Activated CD4-positive, alpha-beta T cell treated with anti-CD3 and anti-CD28 coated beads for 36 hours (primary cell): ENCODE measurements at regions of chr1 and their contacts with region 1.

Region 1: DNA sequence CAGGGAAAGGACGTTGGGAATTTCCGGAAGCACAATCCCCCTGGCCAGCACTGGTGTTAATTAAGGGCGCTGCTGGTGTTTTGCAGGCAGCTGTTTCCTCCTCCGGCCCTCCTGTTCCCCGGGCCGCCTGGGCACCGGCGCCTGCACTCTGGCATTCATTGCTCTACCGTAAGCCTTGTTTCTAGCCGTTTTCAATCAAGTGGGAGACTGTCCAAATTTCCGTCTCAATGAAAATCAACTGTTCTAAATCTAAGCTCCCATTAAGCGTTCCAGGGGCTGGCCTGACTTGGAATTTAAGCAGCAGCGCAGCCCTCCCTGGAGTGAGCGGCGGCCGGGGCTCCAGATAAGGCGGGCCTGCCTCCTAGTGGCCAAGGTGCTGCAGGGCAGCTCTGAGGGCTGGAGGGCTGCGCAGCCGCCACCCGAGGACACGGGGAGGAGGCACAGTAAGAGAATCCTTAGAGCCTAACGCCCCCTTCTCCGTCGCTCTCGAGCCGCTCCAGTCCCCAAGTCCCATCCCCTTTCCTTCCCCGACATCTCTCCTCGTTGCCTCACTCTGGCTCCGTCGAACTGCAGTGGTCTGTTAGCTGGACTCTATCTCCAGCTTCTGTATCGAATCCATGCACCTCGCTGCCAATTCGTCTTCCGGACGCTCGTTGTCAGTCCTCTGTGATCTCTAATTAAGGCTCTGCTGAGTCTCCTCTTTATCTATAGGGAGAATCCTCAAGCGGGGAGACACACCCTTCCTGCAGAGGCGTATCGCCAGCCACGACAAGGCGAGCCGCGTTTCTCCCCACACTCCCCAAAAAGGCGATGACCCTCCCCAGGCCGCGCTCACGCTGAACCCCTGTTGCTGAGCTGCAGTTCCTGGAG is 57.8 kb upstream of the LRRC8D start:
- DNase-seq: peak; percentile 94
- ATAC-seq: peak; percentile 99
- H3K4me3 Mint-ChIP-seq: peak overlapping the region; percentile 68
- H3K27ac Mint-ChIP-seq: peak overlapping the region; percentile 89
- H3K4me1 Mint-ChIP-seq: peaks cover 54% of the 10 kb centered on the region
- H3K27me3 Mint-ChIP-seq: no peaks in the 10 kb centered on the region

Region 2: GRCh38 chr1:89483010-89483756 is 279.8 kb before region 1 on chr1:
- CTCF ChIA-PET with region 1: interaction called, 45 read pairs
- POLR2A ChIA-PET with region 1: no interaction called
- intact Hi-C with region 1: loop called (anchors 1 kb)
- DNase-seq: peak; percentile 91
- ATAC-seq: peak; percentile 86
- H3K4me3 Mint-ChIP-seq: no peak overlapping the region
- H3K27ac Mint-ChIP-seq: no peak overlapping the region
- H3K4me1 Mint-ChIP-seq: peaks cover 21% of the 10 kb centered on the region
- H3K27me3 Mint-ChIP-seq: no peaks in the 10 kb centered on the region

Region 3: DNA sequence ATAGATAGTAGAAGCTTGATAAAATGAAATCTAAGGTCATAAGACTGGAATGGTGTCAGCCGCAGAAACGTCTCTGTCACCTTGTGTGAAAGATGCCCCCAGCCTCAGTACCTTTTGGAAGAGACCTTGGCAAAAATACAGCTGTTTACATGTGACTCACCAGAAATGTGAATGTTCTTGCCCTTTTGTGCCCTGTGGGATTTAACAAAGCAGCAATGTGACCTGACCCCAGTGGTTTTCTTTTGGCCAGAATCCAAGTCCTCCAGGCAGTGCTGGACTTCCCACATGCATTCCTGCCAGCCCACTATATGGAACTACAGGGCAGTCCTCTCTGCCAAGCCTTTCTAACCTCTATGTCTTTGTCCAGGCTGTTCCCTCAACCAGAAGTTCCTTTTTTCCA is 157.3 kb before region 1 on chr1:
- CTCF ChIA-PET with region 1: interaction called, 30 read pairs
- POLR2A ChIA-PET with region 1: interaction called, 6 read pairs
- intact Hi-C with region 1: loop called in 1 of 2 experiments (anchors 2 kb)
- DNase-seq: no peak
- ATAC-seq: no peak
- H3K4me3 Mint-ChIP-seq: peak overlapping the region; percentile 62
- H3K27ac Mint-ChIP-seq: peak overlapping the region; percentile 99
- H3K4me1 Mint-ChIP-seq: peaks cover 92% of the 10 kb centered on the region
- H3K27me3 Mint-ChIP-seq: no peaks in the 10 kb centered on the region

Region 4: GRCh38 chr1:89657886-89658285 is 105.1 kb before region 1 on chr1:
- CTCF ChIA-PET with region 1: interaction called, 24 read pairs
- POLR2A ChIA-PET with region 1: interaction called, 4 read pairs
- intact Hi-C with region 1: no loop called
- DNase-seq: no peak
- ATAC-seq: peak; percentile 56
- H3K4me3 Mint-ChIP-seq: no peak overlapping the region
- H3K27ac Mint-ChIP-seq: peak overlapping the region; percentile 88
- H3K4me1 Mint-ChIP-seq: peaks cover 94% of the 10 kb centered on the region
- H3K27me3 Mint-ChIP-seq: no peaks in the 10 kb centered on the region

Region 5: DNA sequence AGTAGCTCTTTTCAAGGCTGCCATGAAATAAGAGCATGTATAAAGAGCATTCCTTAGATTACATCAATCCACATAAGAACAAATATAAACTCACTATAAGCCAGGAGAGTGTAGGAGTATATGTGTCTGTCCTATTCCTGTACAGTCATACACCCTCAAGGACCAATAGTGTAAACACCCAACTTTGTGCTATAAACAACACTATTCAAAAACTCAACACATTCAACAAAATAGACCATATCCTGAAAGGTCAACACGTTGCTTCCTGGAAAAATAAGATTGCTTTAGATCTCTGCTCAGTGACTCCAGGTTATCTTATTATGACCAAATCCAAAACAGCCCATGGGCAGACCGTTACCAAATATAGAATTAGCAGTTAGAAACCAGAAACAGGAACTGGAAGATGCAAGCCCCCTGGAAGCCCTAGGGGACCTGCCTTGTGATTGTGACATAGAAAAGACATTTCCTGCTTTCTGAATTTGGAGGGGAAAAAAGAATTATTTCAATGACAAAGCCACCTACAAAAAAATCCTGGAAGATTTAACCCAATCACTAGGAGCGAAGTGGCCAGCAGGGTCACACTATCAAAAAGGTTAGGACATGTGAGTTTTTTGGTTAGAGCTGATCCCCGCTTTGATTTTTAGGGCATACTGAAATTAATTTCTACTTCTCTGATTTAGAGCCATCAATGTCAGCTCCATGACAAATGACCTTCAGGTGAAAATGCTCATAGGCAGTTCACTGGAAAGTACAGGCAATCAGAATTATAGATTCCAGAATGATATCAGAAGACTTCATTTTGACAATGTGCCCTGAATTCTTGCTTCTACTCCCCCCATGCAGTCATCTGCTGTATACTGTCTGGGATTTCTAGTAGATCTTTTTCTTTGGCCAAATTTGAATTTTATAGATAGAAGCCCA is 70.2 kb before region 1 on chr1:
- CTCF ChIA-PET with region 1: interaction called, 13 read pairs
- POLR2A ChIA-PET with region 1: no interaction called
- intact Hi-C with region 1: loop called in 1 of 2 experiments (anchors 2 kb)
- DNase-seq: no peak
- ATAC-seq: no peak
- H3K4me3 Mint-ChIP-seq: no peak overlapping the region
- H3K27ac Mint-ChIP-seq: peak overlapping the region; percentile 74
- H3K4me1 Mint-ChIP-seq: peaks cover 94% of the 10 kb centered on the region
- H3K27me3 Mint-ChIP-seq: no peaks in the 10 kb centered on the region

Region 6: DNA sequence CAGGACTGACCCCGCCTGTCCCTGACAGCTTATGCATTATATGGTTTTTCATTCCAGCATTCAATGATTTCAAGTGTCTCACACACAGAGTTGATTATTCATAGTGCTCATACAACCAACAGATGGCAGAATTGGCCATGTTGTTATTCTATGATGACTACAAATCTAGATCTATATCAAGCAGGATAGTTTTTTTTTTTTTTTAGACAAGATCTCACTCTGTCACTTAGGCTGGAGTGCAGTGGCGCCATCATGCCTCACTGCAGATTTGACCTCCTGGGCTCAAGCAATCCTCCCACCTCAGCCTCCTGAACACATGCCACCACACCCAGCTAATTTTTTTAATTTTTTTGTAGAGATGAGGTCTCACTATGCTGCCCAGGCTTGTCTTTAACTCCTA is 17.7 kb after region 1 on chr1:
- CTCF ChIA-PET with region 1: interaction called, 32 read pairs
- POLR2A ChIA-PET with region 1: interaction called, 11 read pairs
- intact Hi-C with region 1: no loop called
- DNase-seq: peak; percentile 59
- ATAC-seq: peak; percentile 73
- H3K4me3 Mint-ChIP-seq: peak overlapping the region; percentile 48
- H3K27ac Mint-ChIP-seq: peak overlapping the region; percentile 86
- H3K4me1 Mint-ChIP-seq: peaks cover 44% of the 10 kb centered on the region
- H3K27me3 Mint-ChIP-seq: no peaks in the 10 kb centered on the region

Region 7: GRCh38 chr1:90083995-90084394 is 321.0 kb after region 1 on chr1:
- CTCF ChIA-PET with region 1: no interaction called
- POLR2A ChIA-PET with region 1: no interaction called
- intact Hi-C with region 1: no loop called
- DNase-seq: no peak
- ATAC-seq: no peak
- H3K4me3 Mint-ChIP-seq: no peak overlapping the region
- H3K27ac Mint-ChIP-seq: no peak overlapping the region
- H3K4me1 Mint-ChIP-seq: no peaks in the 10 kb centered on the region
- H3K27me3 Mint-ChIP-seq: peaks cover 17% of the 10 kb centered on the region